Spleen (tissue), 13 donors: ENCODE measurements at regions of chr7 and their contacts with region 1.

Region 1: GRCh38 chr7:47818796-47819606 is 129.3 kb downstream of the PKD1L1 start:
- DNase-seq: no peak
- H3K4me3 ChIP-seq: no peak overlapping the region
- H3K27ac ChIP-seq: peak overlapping the region in 1 of 8 donors; percentile 32
- H3K4me1 ChIP-seq: peaks cover 0 to 25% (median 7%) of the 10 kb centered on the region in 6 donors
- H3K27me3 ChIP-seq: no peaks in the 10 kb centered on the region
- CTCF ChIP-seq: peak; percentile 82 to 97 (median 90)
- POLR2A ChIP-seq: no peak

Region 2: DNA sequence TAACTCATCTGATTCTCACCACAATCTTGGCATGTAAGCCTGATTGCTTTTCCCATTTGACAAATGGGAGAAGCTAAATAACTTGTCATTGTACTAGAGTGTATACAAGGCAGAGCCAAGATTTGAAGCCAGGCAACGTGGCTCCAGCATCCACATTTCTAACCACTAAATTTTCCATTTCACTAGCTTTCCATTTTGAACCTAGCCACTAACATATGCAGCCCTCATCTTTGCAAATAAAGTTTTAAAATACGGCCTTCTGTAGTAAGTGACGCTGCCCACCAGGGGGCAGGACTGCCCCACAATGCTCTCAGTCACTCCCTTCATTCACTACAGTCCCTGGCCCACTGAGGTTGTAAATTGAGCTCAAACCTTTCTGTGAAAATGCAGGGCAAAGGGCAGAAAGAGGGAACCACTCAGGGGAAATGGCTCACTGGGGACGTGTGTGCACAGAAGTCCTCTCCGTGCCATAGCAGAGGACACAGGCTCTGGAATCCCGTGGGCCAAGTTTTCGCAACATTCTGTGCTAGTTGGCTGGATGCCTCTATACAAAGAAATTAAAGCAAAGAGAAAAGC is 552.8 kb before region 1 on chr7:
- intact Hi-C with region 1: loop called (anchors 5 kb)
- DNase-seq: peak; percentile 79
- H3K4me3 ChIP-seq: no peak overlapping the region
- H3K27ac ChIP-seq: peak overlapping the region in 5 of 8 donors; percentile 33 to 39 (median 36)
- H3K4me1 ChIP-seq: peaks cover 0 to 11% (median 4%) of the 10 kb centered on the region in 6 donors
- H3K27me3 ChIP-seq: no peaks in the 10 kb centered on the region
- CTCF ChIP-seq: peak; percentile 46 to 89 (median 80)
- POLR2A ChIP-seq: no peak

Region 3: GRCh38 chr7:47536661-47537611 is 282.1 kb before region 1 on chr7:
- intact Hi-C with region 1: no loop called
- DNase-seq: peak; percentile 74
- H3K4me3 ChIP-seq: peak overlapping the region in 7 of 8 donors; percentile 27 to 64 (median 33)
- H3K27ac ChIP-seq: peak overlapping the region; percentile 19 to 63 (median 54)
- H3K4me1 ChIP-seq: peaks cover 0 to 73% (median 55%) of the 10 kb centered on the region in 6 donors
- H3K27me3 ChIP-seq: peaks cover 0 to 22% (median 0%) of the 10 kb centered on the region in 7 donors
- CTCF ChIP-seq: no peak
- POLR2A ChIP-seq: no peak

Region 4: DNA sequence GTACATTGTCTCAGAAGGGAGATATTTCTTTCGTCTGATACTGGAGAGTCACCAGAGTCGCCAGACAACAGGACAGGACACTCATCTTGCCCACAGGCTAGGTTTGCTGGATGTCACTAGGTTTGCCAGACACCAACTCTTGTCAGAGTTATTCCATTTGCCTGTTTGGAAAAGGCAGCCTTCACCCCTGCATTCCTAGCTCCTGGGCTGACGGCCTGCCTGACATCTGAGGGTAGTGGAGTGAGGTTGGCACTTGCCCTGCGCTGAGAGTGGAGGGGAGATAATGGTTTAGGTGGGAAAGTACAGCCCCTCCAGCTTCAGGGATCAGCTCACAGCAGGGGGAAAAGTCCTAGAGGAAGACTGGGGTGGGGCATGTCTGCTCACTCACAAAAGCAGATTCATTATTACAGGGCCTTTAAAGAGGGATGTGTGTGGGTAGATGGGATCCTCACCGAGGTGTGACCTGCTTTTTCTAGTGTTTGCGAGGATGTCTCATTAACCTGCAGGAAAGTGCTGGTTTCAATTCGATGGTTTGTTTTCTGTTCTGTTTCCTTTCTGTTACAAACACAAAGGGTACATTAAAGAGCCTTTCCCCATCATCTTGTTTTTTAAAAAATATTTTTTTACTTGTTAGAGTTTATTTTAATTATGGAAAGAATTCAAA is 157.8 kb before region 1 on chr7:
- intact Hi-C with region 1: no loop called
- DNase-seq: peak; percentile 35
- H3K4me3 ChIP-seq: no peak overlapping the region
- H3K27ac ChIP-seq: no peak overlapping the region
- H3K4me1 ChIP-seq: peaks cover 0 to 20% (median 0%) of the 10 kb centered on the region in 6 donors
- H3K27me3 ChIP-seq: no peaks in the 10 kb centered on the region
- CTCF ChIP-seq: no peak
- POLR2A ChIP-seq: no peak